ENCODE measurements at regions of chr3 and their contacts with region 1.

Region 1: DNA sequence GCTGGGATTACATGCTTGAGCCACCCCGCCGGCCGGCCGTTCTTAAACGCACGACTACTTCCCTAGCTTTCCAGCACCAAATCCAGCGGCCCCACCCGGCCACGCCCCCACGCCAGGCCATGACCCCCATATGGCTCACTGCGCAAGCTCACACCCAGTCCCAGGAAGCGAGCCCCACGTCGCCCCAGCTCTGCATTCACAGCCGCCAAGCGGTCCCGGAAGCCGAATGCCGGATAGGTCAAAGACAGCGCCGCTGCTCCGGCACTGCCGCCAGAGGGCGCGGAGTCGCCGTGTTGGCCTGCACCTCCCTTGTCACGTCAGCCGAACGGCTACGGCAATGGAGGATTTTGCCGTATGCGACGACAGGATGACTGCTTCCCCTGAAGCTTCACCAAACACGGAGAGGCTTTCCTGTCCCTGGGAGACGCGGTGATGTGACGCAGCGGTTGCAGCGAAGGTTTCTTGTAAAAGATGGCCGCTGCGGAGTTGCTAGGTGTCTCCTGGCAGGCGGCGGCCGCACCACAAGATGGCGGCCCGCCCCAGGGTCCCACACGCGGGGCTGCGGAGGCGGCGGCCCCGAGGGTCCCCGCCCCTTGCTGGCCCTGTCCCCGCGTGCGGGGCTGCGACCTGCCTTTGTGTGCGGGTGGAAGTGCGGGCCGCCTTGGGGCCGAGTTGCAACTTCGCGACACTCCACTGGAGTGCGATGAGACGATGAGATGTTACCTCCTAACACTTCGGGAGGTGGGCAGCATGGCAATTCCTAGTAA is 30.2 kb upstream of the RPN1 start:
- DNase-seq: peak; percentile 97
- H3K4me3 Mint-ChIP-seq: peak overlapping the region; percentile 86
- H3K27ac Mint-ChIP-seq: peak overlapping the region; percentile 86
- H3K4me1 Mint-ChIP-seq: peaks cover 38% of the 10 kb centered on the region
- H3K27me3 Mint-ChIP-seq: peaks cover 6% of the 10 kb centered on the region

Region 2: GRCh38 chr3:128617557-128618397 is 63.0 kb before region 1 on chr3:
- CTCF ChIA-PET with region 1: interaction called, 10 read pairs
- POLR2A ChIA-PET with region 1: interaction called, 19 read pairs
- DNase-seq: peak; percentile 99
- H3K4me3 Mint-ChIP-seq: peak overlapping the region; percentile 94
- H3K27ac Mint-ChIP-seq: peak overlapping the region; percentile 88
- H3K4me1 Mint-ChIP-seq: peaks cover 51% of the 10 kb centered on the region
- H3K27me3 Mint-ChIP-seq: no peaks in the 10 kb centered on the region

Region 3: DNA sequence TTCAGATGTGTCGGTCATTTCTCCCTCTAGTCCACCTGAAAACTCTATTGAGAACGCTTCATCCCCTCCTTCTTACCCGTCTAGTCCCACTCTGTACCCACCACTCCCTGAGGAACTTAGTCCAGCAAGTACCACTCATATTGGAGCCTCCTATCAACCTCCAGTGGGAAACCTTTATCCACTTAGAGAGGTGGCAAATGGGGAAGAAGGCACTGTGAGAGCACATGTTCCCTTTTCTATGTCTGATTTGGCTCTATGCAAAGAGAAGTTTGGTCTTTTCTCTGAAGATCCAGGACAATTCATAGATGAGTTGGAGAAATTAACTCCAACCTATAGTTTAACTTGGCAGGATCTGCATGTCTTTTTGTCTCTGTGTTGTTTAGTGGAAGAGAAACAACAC is 13.1 kb before region 1 on chr3:
- CTCF ChIA-PET with region 1: interaction called, 12 read pairs
- POLR2A ChIA-PET with region 1: interaction called, 3 read pairs
- DNase-seq: no peak
- H3K4me3 Mint-ChIP-seq: no peak overlapping the region
- H3K27ac Mint-ChIP-seq: no peak overlapping the region
- H3K4me1 Mint-ChIP-seq: no peaks in the 10 kb centered on the region
- H3K27me3 Mint-ChIP-seq: peaks cover 35% of the 10 kb centered on the region

Region 4: DNA sequence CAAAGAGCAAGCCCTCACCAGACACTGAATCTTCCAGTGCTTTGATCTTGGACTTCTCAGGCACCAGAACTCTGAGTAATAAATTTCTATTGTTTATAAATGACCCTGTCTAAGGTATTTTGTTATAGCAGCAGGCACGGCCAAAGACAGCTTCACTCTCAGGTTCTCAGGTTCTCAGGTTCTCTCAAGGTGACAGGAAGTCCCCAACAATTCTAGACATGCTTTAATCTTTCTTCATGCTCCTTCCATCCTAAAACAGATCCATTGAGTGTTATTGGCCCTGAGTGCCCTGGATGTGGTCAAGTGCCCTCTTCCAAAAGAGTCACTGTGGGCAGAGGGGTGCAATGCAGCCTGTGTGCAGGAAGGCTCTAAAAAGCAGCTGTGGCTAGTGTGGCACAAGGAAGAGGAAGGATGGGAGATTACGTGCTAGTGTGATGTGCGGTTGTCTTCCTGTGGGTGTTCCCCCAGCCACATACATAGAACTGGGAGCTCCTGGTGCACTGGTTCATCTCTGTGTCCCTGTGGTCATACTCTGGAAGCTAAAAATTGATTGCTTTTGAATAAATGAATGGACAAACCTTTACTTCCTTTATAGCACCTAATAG is 34.2 kb after region 1 on chr3:
- CTCF ChIA-PET with region 1: interaction called, 20 read pairs
- POLR2A ChIA-PET with region 1: interaction called, 9 read pairs
- DNase-seq: peak; percentile 55
- H3K4me3 Mint-ChIP-seq: peak overlapping the region; percentile 48
- H3K27ac Mint-ChIP-seq: peak overlapping the region; percentile 84
- H3K4me1 Mint-ChIP-seq: peaks cover 28% of the 10 kb centered on the region
- H3K27me3 Mint-ChIP-seq: peaks cover 3% of the 10 kb centered on the region

Region 5: GRCh38 chr3:128794770-128795649 is 114.2 kb after region 1 on chr3:
- CTCF ChIA-PET with region 1: interaction called, 187 read pairs
- POLR2A ChIA-PET with region 1: interaction called, 59 read pairs
- DNase-seq: peak; percentile 71
- H3K4me3 Mint-ChIP-seq: no peak overlapping the region
- H3K27ac Mint-ChIP-seq: peak overlapping the region; percentile 77
- H3K4me1 Mint-ChIP-seq: peaks cover 72% of the 10 kb centered on the region
- H3K27me3 Mint-ChIP-seq: no peaks in the 10 kb centered on the region

Region 6: DNA sequence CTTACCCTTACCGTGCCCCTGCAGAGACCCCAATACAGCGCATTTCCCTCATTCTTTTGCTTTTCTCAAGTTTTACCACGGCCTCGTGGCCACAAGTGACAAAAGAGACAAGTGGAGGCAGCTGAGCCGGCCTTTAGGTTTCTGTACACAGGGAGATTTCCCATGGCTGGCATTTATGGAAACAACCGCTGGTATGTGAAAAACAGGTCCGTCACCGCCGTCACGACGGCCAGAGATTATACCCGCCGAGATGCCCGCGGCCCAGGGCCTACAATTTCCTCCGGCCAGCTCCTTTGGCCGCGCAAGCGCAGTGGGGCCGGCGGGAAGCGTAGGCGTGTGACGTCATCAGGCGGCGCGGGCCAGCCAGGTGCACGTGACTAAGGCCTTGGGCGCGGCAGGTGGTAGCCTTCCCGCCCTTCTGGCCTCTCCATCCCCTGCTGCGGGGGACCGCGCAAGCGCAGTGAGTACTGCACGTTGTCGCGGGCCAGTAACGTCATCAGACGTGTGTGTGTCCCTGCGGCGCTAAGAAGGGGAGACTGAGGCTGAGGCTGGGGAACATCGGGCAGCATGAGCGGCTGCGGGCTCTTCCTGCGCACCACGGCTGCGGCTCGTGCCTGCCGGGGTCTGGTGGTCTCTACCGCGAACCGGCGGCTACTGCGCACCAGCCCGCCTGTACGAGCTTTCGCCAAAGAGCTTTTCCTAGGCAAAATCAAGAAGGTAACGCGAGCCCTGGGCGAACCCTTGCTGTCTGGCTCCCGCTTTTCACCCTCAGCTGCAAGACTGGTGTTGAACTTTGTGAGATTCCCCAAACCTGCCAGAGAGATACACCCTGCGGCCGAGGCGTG is 198.6 kb after region 1 on chr3 and contains the start of gene ACAD9:
- CTCF ChIA-PET with region 1: interaction called, 34 read pairs
- POLR2A ChIA-PET with region 1: interaction called, 45 read pairs
- DNase-seq: peak; percentile 98
- H3K4me3 Mint-ChIP-seq: peak within 1 kb of the TSS; percentile 85
- H3K27ac Mint-ChIP-seq: peak within 1 kb of the TSS; percentile 86
- H3K4me1 Mint-ChIP-seq: peaks cover 64% of the 10 kb centered on the region
- H3K27me3 Mint-ChIP-seq: peaks cover 3% of the 10 kb centered on the region
- total RNA-seq, gene ACAD9: 42.7 to 48.4 TPM